ENCODE measurements at regions of chr11 and their contacts with region 1.

Region 1: DNA sequence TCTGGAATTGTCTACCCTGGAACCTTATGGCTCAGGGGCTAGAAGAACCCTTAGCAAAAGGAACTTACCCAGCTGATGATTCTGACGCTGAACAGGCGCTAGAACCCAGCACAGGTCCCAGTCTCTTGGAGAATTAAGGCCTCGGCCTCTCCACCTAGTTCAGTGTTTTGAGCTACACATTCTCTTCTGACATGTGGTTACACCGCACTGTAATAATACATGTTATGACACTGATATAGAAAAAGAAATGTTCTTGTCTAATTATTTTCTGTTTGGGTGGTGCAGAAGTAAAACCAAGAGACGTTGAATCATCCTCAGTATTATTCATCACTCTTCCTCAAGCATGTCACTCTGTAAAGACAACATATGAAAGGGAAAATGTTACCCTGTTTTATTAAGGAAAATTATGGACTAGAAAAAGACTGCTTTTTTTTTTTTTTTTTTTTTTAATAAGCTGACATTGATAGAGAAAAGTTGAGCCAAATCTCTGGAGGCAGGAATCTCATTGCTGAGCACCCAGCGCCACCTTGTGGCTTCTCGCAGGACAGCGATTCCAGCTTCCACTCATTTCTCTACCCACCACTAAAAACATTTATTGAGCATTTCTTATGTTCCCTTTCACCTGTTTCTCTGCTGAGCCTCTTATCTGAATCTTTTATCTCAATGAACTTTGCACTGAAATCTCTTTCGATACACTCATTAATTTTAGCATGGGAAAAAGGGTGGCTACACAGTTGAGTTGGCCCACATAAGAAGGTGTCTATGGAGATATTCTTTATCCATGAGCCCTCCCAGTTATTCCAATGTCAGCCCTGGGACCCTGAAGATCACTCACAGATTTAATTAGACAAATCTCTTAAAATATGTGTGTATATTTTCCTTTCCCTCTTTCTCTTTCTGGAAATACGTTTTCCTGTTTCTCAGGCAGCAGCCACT is 12.6 kb upstream of the APLNR start:
- DNase-seq: peak; percentile 39
- H3K4me3 ChIP-seq: no peak overlapping the region
- H3K27ac ChIP-seq: no peak overlapping the region
- H3K27me3 ChIP-seq: no peaks in the 10 kb centered on the region
- CTCF ChIP-seq: peak; percentile 96

Region 2: DNA sequence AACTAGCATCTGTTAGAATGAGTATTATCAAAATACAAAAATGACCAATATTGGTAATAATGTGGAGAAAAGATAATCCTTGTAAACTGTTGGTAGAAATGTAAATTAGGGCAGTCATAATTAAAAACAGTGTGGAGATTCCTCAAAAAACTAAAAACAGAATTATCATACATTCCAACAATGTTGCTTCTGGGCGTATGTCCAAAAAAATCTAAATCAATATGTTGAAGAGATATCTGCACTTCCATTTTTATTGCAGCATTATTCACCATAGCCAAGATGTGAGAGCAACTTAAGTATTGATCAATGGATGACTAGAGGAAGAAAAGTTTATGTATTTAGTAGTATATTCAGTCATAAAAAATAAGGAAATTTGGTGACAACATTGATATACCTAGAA is 441.3 kb before region 1 on chr11:
- CTCF ChIA-PET with region 1: no interaction called
- POLR2A ChIA-PET with region 1: no interaction called
- DNase-seq: no peak
- H3K4me3 ChIP-seq: no peak overlapping the region
- H3K27ac ChIP-seq: no peak overlapping the region
- H3K27me3 ChIP-seq: no peaks in the 10 kb centered on the region
- CTCF ChIP-seq: no peak

Region 3: GRCh38 chr11:56855217-56855616 is 394.4 kb before region 1 on chr11:
- CTCF ChIA-PET with region 1: interaction called, 15 read pairs
- POLR2A ChIA-PET with region 1: no interaction called
- DNase-seq: no peak
- H3K4me3 ChIP-seq: no peak overlapping the region
- H3K27ac ChIP-seq: no peak overlapping the region
- H3K27me3 ChIP-seq: no peaks in the 10 kb centered on the region
- CTCF ChIP-seq: no peak

Region 4: DNA sequence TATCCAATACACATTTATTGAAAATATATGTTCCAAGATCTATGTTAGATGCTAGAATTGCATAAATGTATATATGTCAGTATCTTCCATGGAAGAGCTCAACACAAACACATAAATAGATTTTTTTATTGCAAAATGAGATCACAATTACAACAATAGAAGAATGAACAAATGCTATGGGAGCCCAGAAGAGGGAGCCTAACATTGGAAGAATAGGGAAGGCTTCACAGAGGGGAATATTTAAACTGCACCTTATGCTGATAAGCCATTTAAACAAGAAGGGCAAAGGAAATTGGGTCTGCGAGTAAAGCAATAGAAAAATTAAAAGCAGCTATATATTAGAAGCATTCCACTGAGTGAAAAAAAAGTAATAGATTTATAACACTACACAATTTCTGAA is 164.0 kb before region 1 on chr11:
- CTCF ChIA-PET with region 1: interaction called, 19 read pairs
- POLR2A ChIA-PET with region 1: no interaction called
- DNase-seq: no peak
- H3K4me3 ChIP-seq: no peak overlapping the region
- H3K27ac ChIP-seq: no peak overlapping the region
- H3K27me3 ChIP-seq: no peaks in the 10 kb centered on the region
- CTCF ChIP-seq: peak; percentile 30

Region 5: GRCh38 chr11:57150454-57150917 is 99.2 kb before region 1 on chr11:
- CTCF ChIA-PET with region 1: interaction called, 12 read pairs
- POLR2A ChIA-PET with region 1: no interaction called
- DNase-seq: no peak
- H3K4me3 ChIP-seq: no peak overlapping the region
- H3K27ac ChIP-seq: no peak overlapping the region
- H3K27me3 ChIP-seq: no peaks in the 10 kb centered on the region
- CTCF ChIP-seq: no peak

Region 6: GRCh38 chr11:57224537-57224936 is 25.1 kb before region 1 on chr11:
- CTCF ChIA-PET with region 1: interaction called, 69 read pairs
- POLR2A ChIA-PET with region 1: no interaction called
- DNase-seq: no peak
- H3K4me3 ChIP-seq: no peak overlapping the region
- H3K27ac ChIP-seq: no peak overlapping the region
- H3K27me3 ChIP-seq: peaks cover 8% of the 10 kb centered on the region
- CTCF ChIP-seq: no peak

Region 7: DNA sequence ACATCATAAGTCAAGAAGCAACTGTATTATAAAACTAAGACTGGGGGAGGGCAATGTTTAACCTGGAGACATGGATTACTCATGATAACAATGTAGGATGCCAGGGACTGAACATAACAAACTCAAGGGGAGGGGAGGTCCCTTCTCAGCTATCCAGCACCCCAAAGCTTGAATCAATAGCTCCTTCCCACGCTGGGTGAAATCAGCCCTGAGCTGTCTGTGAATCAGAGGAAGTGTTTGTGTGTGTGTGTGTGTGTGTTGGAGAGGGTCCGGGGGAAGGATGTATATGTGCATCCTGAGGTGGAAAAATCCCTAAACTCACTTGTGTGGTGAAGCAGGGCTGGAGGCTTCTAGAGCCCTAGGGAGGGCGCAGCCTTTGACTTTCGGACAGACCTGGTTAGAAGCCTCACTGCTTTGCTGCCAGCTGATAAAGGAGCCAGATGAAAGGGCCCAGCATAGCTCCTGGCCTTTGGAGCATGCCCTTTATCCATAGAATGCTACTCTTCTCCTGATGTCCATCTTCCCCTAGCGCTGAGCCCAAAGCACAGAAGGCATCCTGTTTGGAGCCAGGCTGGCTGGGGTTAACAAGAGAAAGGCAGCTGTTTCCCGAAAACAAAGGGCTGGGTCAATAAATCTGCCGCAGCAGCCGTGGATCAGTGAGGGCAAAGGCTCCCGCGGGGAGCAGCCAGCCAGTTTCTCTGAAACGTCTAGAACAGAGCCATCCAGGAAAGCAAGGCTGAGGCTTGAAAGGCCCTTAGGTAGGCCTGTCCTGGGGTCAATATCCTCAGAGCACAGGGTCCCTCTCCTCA is 39.3 kb after region 1 on chr11:
- CTCF ChIA-PET with region 1: interaction called, 11 read pairs
- POLR2A ChIA-PET with region 1: no interaction called
- DNase-seq: peak; percentile 72
- H3K4me3 ChIP-seq: no peak overlapping the region
- H3K27ac ChIP-seq: peak overlapping the region; percentile 69
- H3K27me3 ChIP-seq: no peaks in the 10 kb centered on the region
- CTCF ChIP-seq: no peak

Region 8: GRCh38 chr11:57303280-57303989 is 53.8 kb after region 1 on chr11:
- CTCF ChIA-PET with region 1: no interaction called
- POLR2A ChIA-PET with region 1: no interaction called
- DNase-seq: no peak
- H3K4me3 ChIP-seq: no peak overlapping the region
- H3K27ac ChIP-seq: no peak overlapping the region
- H3K27me3 ChIP-seq: no peaks in the 10 kb centered on the region
- CTCF ChIP-seq: no peak